Colonic mucosa (tissue), 4 donors: ENCODE measurements at regions of chr3 and their contacts with region 1.

Region 1: DNA sequence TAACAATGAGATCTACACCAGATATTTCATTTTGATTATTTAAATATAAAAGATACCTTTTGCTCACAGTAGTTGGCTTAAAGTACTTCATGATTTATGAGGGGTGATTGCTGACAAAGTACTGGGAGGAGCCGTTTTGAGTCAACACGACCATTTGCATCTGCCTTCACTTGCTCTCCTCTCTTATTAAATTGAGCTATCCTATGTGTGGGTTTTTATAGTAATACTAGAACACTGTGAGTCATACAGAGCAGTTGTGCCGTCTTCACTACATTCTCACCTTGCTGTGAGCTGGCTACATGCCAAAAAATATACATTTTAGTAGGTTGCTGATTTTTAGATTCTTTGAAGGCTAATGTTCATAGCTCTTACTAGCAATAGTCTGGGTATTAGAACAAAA is 161.2 kb downstream of the ALCAM start:
- DNase-seq: no peak
- H3K4me3 ChIP-seq: no peak overlapping the region
- H3K27ac ChIP-seq: no peak overlapping the region
- H3K4me1 ChIP-seq: no peaks in the 10 kb centered on the region
- H3K27me3 ChIP-seq: no peaks in the 10 kb centered on the region
- CTCF ChIP-seq: no peak

Region 2: DNA sequence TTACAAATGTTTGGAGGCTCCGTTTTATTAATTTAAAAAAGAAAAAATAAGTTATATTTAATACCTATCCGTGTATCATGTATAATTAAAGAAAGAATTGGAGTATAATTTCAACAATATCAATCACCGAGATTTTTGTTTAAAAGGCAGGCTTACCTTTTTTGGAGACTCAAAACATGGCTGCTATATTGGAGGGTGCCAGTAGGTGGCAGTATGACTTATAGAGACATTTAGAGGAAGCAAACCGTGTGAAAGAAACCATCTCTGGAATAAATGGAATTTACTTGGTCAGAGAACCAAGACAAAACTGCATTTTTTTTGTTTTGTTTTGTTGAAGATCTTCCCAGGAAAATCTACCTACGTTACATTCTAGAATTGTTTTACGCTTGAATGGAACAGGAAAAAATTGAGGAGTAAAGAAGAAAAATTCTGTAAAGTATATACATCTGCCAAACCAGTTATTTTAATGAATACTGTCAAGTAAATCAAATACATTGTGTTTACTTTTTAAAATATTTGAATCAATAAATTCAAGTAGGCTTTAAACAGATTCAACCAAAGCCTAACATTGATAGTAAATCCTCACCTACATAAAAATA is 963.8 kb before region 1 on chr3:
- intact Hi-C with region 1: loop called (anchors 10 kb)
- DNase-seq: peak; percentile 65
- H3K4me3 ChIP-seq: no peak overlapping the region
- H3K27ac ChIP-seq: no peak overlapping the region
- H3K4me1 ChIP-seq: no peaks in the 10 kb centered on the region
- H3K27me3 ChIP-seq: no peaks in the 10 kb centered on the region
- CTCF ChIP-seq: peak; percentile 68